ENCODE measurements at regions of chr2 and their contacts with region 1.

Region 1: DNA sequence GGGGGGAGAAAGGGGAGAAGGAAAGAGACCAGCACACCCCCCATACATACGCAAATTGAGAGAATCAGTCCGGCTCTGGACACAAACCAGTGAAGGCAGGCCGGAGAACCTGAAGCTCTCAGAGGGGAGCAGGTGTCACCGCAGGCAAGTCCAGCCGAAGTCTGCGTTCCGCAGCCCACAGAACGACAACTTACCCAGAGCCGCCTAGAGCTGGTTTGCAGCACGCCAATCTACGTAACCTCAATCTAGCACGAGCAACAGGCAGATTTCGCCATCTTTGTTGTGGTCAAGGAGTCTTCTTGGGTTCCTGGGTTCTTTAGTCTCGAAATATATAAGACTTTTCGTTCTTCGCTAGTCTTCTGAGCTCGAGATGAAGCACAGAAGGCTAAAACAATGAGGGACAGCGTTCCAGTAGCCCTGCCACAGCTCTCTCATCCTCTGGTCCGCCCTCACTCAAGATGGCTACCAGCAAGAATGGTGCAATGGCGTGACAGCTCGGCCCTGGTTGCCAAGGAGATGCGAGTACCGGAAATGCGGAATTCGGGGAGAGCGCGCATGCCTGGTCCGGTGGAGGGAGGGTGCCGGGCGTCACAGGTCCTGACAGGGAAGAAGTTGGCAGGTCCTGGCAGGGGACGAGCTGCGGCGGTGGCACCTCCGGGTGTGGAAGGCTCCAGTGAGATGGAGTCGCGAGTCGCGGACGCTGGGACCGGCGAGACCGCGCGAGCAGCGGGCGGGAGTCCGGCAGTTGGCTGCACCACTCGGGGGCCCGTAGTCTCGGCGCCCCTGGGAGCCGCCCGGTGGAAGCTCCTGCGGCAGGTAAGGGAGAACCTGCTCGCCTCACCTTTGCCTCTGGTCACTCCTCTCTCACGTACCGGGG is at the starts of genes CAMKMT and PREPL:
- DNase-seq: peak; percentile 97
- H3K4me3 Mint-ChIP-seq: peak within 1 kb of the TSS; percentile 84
- H3K27ac Mint-ChIP-seq: peak within 1 kb of the TSS; percentile 99
- H3K4me1 Mint-ChIP-seq: peaks cover 19% of the 10 kb centered on the region
- H3K27me3 Mint-ChIP-seq: no peaks in the 10 kb centered on the region
- CTCF ChIP-seq: no peak
- total RNA-seq, gene CAMKMT: 9.9 and 14.4 TPM in 2 replicates
- total RNA-seq, gene PREPL: 53.0 and 70.0 TPM in 2 replicates

Region 2: GRCh38 chr2:43995733-43996533 is 365.6 kb before region 1 on chr2 and contains the start of gene LRPPRC:
- CTCF ChIA-PET with region 1: no interaction called
- POLR2A ChIA-PET with region 1: interaction called, 15 read pairs
- intact Hi-C with region 1: no loop called
- DNase-seq: peak; percentile 98
- H3K4me3 Mint-ChIP-seq: peak within 1 kb of the TSS; percentile 87
- H3K27ac Mint-ChIP-seq: peak within 1 kb of the TSS; percentile 100
- H3K4me1 Mint-ChIP-seq: peaks cover 36% of the 10 kb centered on the region
- H3K27me3 Mint-ChIP-seq: no peaks in the 10 kb centered on the region
- CTCF ChIP-seq: no peak
- total RNA-seq, gene LRPPRC: 139 and 160 TPM in 2 replicates

Region 3: GRCh38 chr2:44071454-44072046 is 290.0 kb before region 1 on chr2:
- CTCF ChIA-PET with region 1: no interaction called
- POLR2A ChIA-PET with region 1: no interaction called
- intact Hi-C with region 1: no loop called
- DNase-seq: no peak
- H3K4me3 Mint-ChIP-seq: no peak overlapping the region
- H3K27ac Mint-ChIP-seq: no peak overlapping the region
- H3K4me1 Mint-ChIP-seq: no peaks in the 10 kb centered on the region
- H3K27me3 Mint-ChIP-seq: peaks cover 34% of the 10 kb centered on the region
- CTCF ChIP-seq: no peak

Region 4: GRCh38 chr2:44167940-44168680 is 193.5 kb before region 1 on chr2:
- CTCF ChIA-PET with region 1: no interaction called
- POLR2A ChIA-PET with region 1: interaction called, 48 read pairs
- intact Hi-C with region 1: no loop called
- DNase-seq: peak; percentile 100
- H3K4me3 Mint-ChIP-seq: peak overlapping the region; percentile 93
- H3K27ac Mint-ChIP-seq: peak overlapping the region; percentile 99
- H3K4me1 Mint-ChIP-seq: peaks cover 11% of the 10 kb centered on the region
- H3K27me3 Mint-ChIP-seq: no peaks in the 10 kb centered on the region
- CTCF ChIP-seq: no peak

Region 5: DNA sequence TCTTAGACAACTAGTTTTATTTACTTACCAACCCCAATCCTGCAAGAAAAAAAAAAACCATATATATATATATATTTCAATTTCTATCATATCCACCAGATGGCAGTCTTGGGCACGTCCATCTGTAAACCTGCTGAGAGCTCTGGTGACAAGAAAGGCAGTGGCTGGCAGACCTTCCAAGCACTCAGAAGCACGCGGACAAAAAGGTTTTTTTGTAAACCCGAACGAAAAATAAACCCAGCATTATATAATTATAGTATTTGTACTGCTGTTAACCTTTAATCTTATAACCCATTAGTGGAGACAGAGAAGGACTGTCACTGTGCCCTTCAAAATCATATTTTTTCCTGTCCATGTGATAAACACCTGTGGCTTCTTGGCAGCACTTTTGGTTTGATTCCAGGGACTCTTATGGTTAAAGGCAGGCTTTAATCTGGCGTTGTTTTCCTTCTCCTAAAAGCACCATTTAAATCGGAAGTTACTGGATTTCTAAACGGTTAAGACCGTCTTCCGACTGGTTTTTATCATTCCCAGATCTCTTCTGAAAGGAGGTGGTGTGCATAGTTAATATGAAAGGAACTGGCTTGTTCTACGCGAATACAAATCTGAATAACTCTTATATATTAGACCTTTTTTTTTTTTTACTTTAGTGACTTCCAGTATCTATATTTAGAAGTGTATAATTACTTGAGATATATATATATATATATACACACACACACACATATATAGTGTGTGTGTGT is 117.3 kb before region 1 on chr2:
- CTCF ChIA-PET with region 1: interaction called, 4 read pairs
- POLR2A ChIA-PET with region 1: interaction called, 11 read pairs
- intact Hi-C with region 1: no loop called
- DNase-seq: peak; percentile 74
- H3K4me3 Mint-ChIP-seq: peak overlapping the region; percentile 43
- H3K27ac Mint-ChIP-seq: no peak overlapping the region
- H3K4me1 Mint-ChIP-seq: peaks cover 14% of the 10 kb centered on the region
- H3K27me3 Mint-ChIP-seq: no peaks in the 10 kb centered on the region
- CTCF ChIP-seq: peak; percentile 43

Region 6: DNA sequence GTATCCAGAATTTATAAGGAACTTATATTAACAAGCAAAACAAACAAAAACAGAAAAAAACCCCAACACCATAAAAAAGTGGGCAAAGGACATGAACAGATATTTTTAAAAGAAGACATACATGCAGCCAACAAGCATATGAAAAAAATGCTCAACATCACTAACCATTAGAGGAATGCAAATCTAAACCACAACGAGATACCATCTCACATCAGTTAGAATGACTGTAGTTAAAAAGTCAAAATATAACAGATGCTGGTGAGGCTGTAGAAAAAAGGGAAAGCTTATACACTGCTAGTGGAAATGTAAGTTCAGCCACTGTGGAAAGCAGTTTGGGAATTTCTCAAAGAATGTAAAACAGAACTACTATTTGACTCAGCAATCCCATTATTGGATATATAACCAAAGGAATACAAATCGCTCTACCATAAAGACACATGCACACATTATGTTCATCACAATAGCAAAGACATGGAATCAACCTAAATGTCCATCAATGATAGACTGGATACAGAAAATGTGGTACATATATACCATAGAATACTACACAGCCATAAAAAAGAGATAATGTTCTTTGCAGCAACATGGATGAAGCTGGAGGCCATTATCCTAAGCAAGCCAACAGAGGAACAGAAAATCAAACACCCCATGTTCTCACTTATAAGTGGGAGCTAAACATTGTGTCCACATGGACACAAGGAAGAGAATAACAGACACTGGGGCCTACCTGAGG is 25.6 kb before region 1 on chr2:
- CTCF ChIA-PET with region 1: no interaction called
- POLR2A ChIA-PET with region 1: interaction called, 11 read pairs
- intact Hi-C with region 1: no loop called
- DNase-seq: no peak
- H3K4me3 Mint-ChIP-seq: no peak overlapping the region
- H3K27ac Mint-ChIP-seq: no peak overlapping the region
- H3K4me1 Mint-ChIP-seq: peaks cover under 1% of the 10 kb centered on the region
- H3K27me3 Mint-ChIP-seq: no peaks in the 10 kb centered on the region
- CTCF ChIP-seq: no peak

Region 7: GRCh38 chr2:44348400-44348799 is 13.2 kb before region 1 on chr2:
- CTCF ChIA-PET with region 1: interaction called, 5 read pairs
- POLR2A ChIA-PET with region 1: interaction called, 40 read pairs
- intact Hi-C with region 1: no loop called
- DNase-seq: no peak
- H3K4me3 Mint-ChIP-seq: no peak overlapping the region
- H3K27ac Mint-ChIP-seq: no peak overlapping the region
- H3K4me1 Mint-ChIP-seq: no peaks in the 10 kb centered on the region
- H3K27me3 Mint-ChIP-seq: no peaks in the 10 kb centered on the region
- CTCF ChIP-seq: no peak

Region 8: DNA sequence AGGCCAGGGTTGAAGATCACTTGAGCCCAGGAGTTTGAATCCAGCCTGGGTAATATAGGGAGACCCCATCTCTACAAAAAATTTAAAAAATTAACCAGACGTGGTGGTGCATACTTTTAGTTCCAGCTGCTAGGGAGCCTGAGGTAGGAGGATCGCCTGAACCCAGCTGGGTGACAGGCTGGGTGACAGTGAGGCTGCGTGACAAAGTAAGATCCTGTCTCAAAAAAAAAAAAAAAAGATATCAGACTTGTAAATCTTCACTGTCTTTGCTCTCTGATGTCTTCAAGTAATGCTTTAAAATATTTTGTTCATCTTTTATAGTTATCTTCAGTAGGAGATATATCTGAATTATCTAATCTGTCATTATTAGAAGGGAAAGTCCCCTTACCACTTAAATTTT is 10.7 kb after region 1 on chr2:
- CTCF ChIA-PET with region 1: interaction called, 4 read pairs
- POLR2A ChIA-PET with region 1: interaction called, 20 read pairs
- intact Hi-C with region 1: no loop called
- DNase-seq: no peak
- H3K4me3 Mint-ChIP-seq: no peak overlapping the region
- H3K27ac Mint-ChIP-seq: no peak overlapping the region
- H3K4me1 Mint-ChIP-seq: no peaks in the 10 kb centered on the region
- H3K27me3 Mint-ChIP-seq: no peaks in the 10 kb centered on the region
- CTCF ChIP-seq: no peak